ENCODE measurements at regions of chr1 and their contacts with region 1.

Region 1: GRCh38 chr1:45913183-45913683 is 109.8 kb downstream of the MAST2 start:
- DNase-seq: no peak
- H3K4me3 ChIP-seq: peak overlapping the region in 3 of 4 donors; percentile 10 to 27 (median 26)
- H3K27ac ChIP-seq: peak overlapping the region; percentile 70 to 87 (median 82)
- H3K4me1 ChIP-seq: peaks cover 11 to 69% (median 50%) of the 10 kb centered on the region in 4 donors
- H3K27me3 ChIP-seq: no peaks in the 10 kb centered on the region
- CTCF ChIP-seq: no peak
- EP300 ChIP-seq: peak; percentile 24
- POLR2A ChIP-seq: no peak

Region 2: DNA sequence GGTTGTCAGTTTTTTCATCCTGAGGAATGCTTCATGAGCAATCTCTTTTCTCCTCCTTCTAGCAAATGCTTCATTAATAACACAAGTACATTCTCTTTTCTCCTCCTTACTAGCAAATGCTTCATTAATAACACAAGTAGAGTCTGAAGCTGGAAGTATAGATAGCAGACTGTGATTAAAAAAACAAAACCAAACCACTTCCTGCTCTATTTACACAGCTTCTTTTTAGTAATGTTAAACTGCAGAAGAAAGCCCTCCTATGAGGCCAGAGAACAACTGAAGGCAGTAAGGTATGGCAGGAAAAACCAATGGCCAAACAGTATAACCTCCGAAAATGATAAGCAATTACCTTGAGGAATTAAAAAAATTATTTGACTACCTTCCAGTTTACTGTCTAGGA is 796.9 kb before region 1 on chr1:
- intact Hi-C with region 1: no loop called
- DNase-seq: no peak
- H3K4me3 ChIP-seq: no peak overlapping the region
- H3K27ac ChIP-seq: no peak overlapping the region
- H3K4me1 ChIP-seq: peaks cover 0 to 9% (median 4%) of the 10 kb centered on the region in 4 donors
- H3K27me3 ChIP-seq: no peaks in the 10 kb centered on the region
- CTCF ChIP-seq: no peak
- EP300 ChIP-seq: no peak
- POLR2A ChIP-seq: no peak

Region 3: GRCh38 chr1:45583264-45583665 is 330.0 kb before region 1 on chr1:
- intact Hi-C with region 1: no loop called
- DNase-seq: peak; percentile 98
- H3K4me3 ChIP-seq: peak overlapping the region; percentile 90 to 100 (median 92)
- H3K27ac ChIP-seq: peak overlapping the region; percentile 88 to 97 (median 94)
- H3K4me1 ChIP-seq: peaks cover 22 to 42% (median 29%) of the 10 kb centered on the region in 4 donors
- H3K27me3 ChIP-seq: no peaks in the 10 kb centered on the region
- CTCF ChIP-seq: no peak
- EP300 ChIP-seq: no peak
- POLR2A ChIP-seq: no peak

Region 4: DNA sequence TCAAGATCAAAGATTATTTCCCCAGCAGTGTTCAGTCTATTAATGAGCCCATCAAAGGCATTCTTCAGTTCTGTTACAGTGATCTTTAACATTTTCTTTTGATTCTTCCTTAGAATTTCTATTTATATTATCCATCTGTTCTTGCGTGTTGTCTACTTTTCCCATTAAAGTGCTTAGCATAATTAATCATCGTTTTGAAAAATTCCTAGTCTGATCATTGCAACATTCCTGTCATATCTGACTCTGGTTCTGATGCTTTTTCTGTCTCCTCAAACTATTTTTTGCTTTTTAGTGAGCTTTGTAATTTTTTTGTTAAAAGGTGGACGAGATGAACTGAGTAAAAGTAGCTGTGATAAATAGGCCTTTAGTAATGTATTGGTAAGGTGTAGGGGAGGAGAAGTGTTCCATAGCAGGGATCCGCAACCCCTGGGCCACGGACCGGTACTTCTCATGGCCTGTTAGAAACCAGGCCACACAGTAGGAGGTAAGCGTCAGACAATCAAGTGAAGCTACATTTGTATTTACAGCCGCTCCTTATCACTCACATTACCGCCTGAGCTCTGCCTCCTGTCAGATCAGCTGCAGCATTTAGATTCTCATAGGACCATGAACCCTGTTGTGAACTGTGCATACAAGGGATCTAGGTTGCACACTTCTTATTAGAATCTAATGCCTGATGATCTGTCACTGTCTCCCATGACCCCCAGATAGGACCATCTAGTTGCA is 55.9 kb after region 1 on chr1:
- intact Hi-C with region 1: loop called (anchors 10 kb)
- DNase-seq: no peak
- H3K4me3 ChIP-seq: no peak overlapping the region
- H3K27ac ChIP-seq: peak overlapping the region; percentile 84 to 86 (median 86)
- H3K4me1 ChIP-seq: peaks cover 5 to 59% (median 36%) of the 10 kb centered on the region in 4 donors
- H3K27me3 ChIP-seq: no peaks in the 10 kb centered on the region
- CTCF ChIP-seq: no peak
- EP300 ChIP-seq: no peak
- POLR2A ChIP-seq: no peak

Measured in esophagus muscularis mucosa (tissue), 4 donors.